ENCODE measurements at regions of chr12 and their contacts with region 1.

Region 1: DNA sequence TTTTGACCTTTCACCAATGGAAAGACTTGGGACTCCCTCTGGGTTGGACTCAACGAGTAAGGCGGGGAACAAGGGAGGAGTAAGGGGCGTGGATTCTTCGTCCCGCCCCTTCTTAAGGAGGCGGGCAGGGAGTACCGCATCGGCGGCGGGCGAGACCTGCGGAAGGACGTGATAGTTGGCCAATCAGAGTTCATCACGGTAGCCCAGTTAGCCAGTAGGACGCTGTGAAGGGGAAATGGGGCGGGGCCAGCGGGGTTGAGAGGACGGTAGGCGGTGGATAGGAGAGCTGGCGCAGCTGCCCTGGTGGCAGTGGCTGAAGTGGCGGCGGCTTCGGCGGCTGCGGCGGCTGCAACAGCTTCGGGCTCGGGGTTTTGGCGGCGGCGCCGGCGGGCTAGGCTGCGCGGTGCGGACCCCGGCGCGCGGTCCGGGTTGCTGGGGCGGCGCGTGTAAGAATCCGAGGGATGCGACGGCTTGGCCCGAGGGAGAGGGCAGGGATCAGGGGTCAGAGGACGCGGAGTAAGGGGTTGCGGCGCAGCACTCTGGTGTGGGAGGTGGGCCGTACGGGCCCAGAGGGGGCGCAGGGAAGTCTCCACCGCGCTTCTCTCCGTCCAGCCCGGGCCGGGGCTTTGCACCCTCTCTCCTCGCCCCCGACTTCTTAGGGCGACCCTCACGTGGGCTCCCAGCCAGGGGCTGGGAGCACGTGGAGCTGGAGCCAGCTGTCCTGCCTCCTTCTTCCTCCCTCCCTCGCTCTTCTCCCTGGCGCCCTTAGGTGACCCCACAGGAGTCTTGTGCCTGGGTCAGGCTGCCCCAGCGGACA is at the start of gene TPCN1:
- DNase-seq: peak; percentile 94 to 99 (median 99)
- ATAC-seq: peak; percentile 97
- H3K4me3 ChIP-seq: peak within 1 kb of the TSS; percentile 70
- H3K4me3 Mint-ChIP-seq: peak within 1 kb of the TSS; percentile 79 to 99 (median 92)
- H3K27ac ChIP-seq: peak within 1 kb of the TSS; percentile 83
- H3K27ac Mint-ChIP-seq: peak within 1 kb of the TSS; percentile 81 to 97 (median 92)
- H3K4me1 ChIP-seq: peaks cover 17 to 32% of the 10 kb centered on the region in 2 donors
- H3K4me1 Mint-ChIP-seq: peaks cover 24 to 49% (median 45%) of the 10 kb centered on the region in 7 donors
- H3K27me3 ChIP-seq: no peaks in the 10 kb centered on the region
- H3K27me3 Mint-ChIP-seq: no peaks in the 10 kb centered on the region
- total RNA-seq, gene TPCN1: 49.5 to 124 (median 107) TPM

Region 2: DNA sequence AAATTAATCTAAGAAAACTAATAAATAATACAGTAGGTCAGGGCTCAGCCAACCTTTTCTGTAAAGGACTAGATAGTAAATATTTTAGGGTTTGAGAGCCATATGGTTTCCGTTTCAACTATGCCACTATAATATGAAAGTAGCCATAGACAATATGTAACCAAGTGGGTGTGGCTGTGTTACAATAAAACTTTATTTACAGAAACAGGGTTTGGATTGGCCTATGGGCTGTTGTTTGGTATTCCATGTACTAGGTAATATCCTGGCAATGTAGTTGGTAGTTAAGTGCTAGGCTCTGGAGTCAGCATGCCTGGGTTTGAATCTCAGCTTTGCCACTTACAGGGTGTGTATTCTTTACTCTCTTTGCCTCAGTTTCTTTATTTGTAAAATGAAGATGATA is 586.4 kb before region 1 on chr12:
- CTCF ChIA-PET with region 1: no interaction called
- POLR2A ChIA-PET with region 1: no interaction called
- intact Hi-C with region 1: no loop called
- DNase-seq: no peak
- ATAC-seq: no peak
- H3K4me3 ChIP-seq: no peak overlapping the region
- H3K4me3 Mint-ChIP-seq: no peak overlapping the region
- H3K27ac ChIP-seq: no peak overlapping the region
- H3K27ac Mint-ChIP-seq: no peak overlapping the region
- H3K4me1 ChIP-seq: no peaks in the 10 kb centered on the region
- H3K4me1 Mint-ChIP-seq: no peaks in the 10 kb centered on the region
- H3K27me3 ChIP-seq: no peaks in the 10 kb centered on the region
- H3K27me3 Mint-ChIP-seq: peaks cover 2 to 54% (median 43%) of the 10 kb centered on the region in 5 donors

Region 3: DNA sequence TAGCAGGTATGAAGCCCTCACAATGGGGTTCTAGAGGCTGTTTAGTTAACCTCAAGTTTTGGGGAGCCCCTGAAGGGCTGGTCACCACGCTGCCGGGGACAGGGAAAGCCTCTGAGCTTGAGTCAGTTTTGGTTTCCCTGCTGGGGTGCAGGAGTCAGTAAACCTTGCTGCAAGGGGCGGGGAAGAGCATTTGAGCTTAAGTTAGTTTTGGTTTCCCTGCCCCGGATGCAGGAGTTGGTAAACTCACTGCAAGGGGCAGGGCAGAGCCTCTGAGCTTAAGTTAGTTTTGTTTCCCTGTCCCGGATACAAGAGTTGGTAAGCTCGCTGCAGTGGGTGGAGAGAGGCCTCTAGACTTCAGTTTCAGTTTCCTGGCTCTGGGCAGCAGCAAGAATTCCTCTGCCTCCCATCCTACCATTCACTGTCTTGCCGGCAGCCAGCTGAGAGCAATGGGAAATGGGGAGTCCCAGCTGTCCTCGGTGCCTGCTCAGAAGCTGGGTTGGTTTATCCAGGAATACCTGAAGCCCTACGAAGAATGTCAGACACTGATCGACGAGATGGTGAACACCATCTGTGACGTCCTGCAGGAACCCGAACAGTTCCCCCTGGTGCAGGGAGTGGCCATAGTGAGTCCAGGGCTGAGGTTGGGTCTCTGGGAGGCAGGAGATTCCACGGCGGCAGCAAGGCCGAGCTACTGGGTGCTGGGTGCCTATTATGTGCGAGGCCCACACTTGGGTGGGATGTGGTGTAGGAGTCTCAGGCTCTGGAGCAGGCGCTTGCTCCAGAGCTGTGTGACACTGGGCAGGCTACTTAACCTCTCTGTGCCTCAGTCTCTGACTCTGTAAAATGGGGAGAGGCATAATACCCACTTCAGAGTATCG is 243.0 kb before region 1 on chr12 and contains the start of gene OAS2:
- CTCF ChIA-PET with region 1: no interaction called
- POLR2A ChIA-PET with region 1: interaction called, 6 read pairs
- intact Hi-C with region 1: loop called in 1 of 2 experiments (anchors 2 kb)
- DNase-seq: peak; percentile 35 to 89 (median 85)
- ATAC-seq: peak; percentile 97
- H3K4me3 ChIP-seq: peak within 1 kb of the TSS; percentile 99
- H3K4me3 Mint-ChIP-seq: peak within 1 kb of the TSS; percentile 87 to 100 (median 96)
- H3K27ac ChIP-seq: peak within 1 kb of the TSS; percentile 89
- H3K27ac Mint-ChIP-seq: peak within 1 kb of the TSS; percentile 97 to 100 (median 99)
- H3K4me1 ChIP-seq: peaks cover 34 to 37% of the 10 kb centered on the region in 2 donors
- H3K4me1 Mint-ChIP-seq: peaks cover 30 to 59% (median 42%) of the 10 kb centered on the region in 7 donors
- H3K27me3 ChIP-seq: no peaks in the 10 kb centered on the region
- H3K27me3 Mint-ChIP-seq: no peaks in the 10 kb centered on the region
- total RNA-seq, gene OAS2: 29.9 to 238 (median 66.0) TPM

Region 4: GRCh38 chr12:113184900-113185773 is 36.3 kb before region 1 on chr12 and contains the starts of genes DDX54 and RITA1:
- CTCF ChIA-PET with region 1: interaction called, 3 read pairs
- POLR2A ChIA-PET with region 1: interaction called, 30 read pairs
- intact Hi-C with region 1: loop called (anchors 1 kb)
- DNase-seq: peak; percentile 85 to 95 (median 91)
- ATAC-seq: peak; percentile 88
- H3K4me3 ChIP-seq: peak within 1 kb of the TSS; percentile 77
- H3K4me3 Mint-ChIP-seq: peak within 1 kb of the TSS; percentile 92 to 99 (median 96)
- H3K27ac ChIP-seq: peak within 1 kb of the TSS; percentile 96
- H3K27ac Mint-ChIP-seq: peak within 1 kb of the TSS; percentile 91 to 98 (median 97)
- H3K4me1 ChIP-seq: peaks cover 20 to 32% of the 10 kb centered on the region in 2 donors
- H3K4me1 Mint-ChIP-seq: peaks cover 20 to 55% (median 33%) of the 10 kb centered on the region in 7 donors
- H3K27me3 ChIP-seq: no peaks in the 10 kb centered on the region
- H3K27me3 Mint-ChIP-seq: no peaks in the 10 kb centered on the region
- total RNA-seq, gene DDX54: 55.8 to 81.1 (median 76.7) TPM
- total RNA-seq, gene RITA1: 6.4 to 20.2 (median 14.1) TPM

Region 5: GRCh38 chr12:113208041-113208934 is 13.1 kb before region 1 on chr12:
- CTCF ChIA-PET with region 1: interaction called, 4 read pairs
- POLR2A ChIA-PET with region 1: interaction called, 32 read pairs
- intact Hi-C with region 1: loop called (anchors 1 kb)
- DNase-seq: peak; percentile 18 to 72 (median 62)
- ATAC-seq: peak; percentile 89
- H3K4me3 ChIP-seq: no peak overlapping the region
- H3K4me3 Mint-ChIP-seq: peak overlapping the region; percentile 59 to 86 (median 77)
- H3K27ac ChIP-seq: peak overlapping the region; percentile 64
- H3K27ac Mint-ChIP-seq: peak overlapping the region; percentile 82 to 97 (median 90)
- H3K4me1 ChIP-seq: peaks cover 38 to 45% of the 10 kb centered on the region in 2 donors
- H3K4me1 Mint-ChIP-seq: peaks cover 28 to 62% (median 51%) of the 10 kb centered on the region in 7 donors
- H3K27me3 ChIP-seq: no peaks in the 10 kb centered on the region
- H3K27me3 Mint-ChIP-seq: no peaks in the 10 kb centered on the region

Region 6: GRCh38 chr12:113248842-113249425 is 27.5 kb after region 1 on chr12:
- CTCF ChIA-PET with region 1: no interaction called
- POLR2A ChIA-PET with region 1: no interaction called
- intact Hi-C with region 1: no loop called
- DNase-seq: no peak
- ATAC-seq: no peak
- H3K4me3 ChIP-seq: no peak overlapping the region
- H3K4me3 Mint-ChIP-seq: no peak overlapping the region
- H3K27ac ChIP-seq: no peak overlapping the region
- H3K27ac Mint-ChIP-seq: peak overlapping the region in 7 of 9 donors; percentile 7 to 81 (median 59)
- H3K4me1 ChIP-seq: no peaks in the 10 kb centered on the region
- H3K4me1 Mint-ChIP-seq: peaks cover 11 to 25% (median 19%) of the 10 kb centered on the region in 7 donors
- H3K27me3 ChIP-seq: no peaks in the 10 kb centered on the region
- H3K27me3 Mint-ChIP-seq: no peaks in the 10 kb centered on the region

Region 7: DNA sequence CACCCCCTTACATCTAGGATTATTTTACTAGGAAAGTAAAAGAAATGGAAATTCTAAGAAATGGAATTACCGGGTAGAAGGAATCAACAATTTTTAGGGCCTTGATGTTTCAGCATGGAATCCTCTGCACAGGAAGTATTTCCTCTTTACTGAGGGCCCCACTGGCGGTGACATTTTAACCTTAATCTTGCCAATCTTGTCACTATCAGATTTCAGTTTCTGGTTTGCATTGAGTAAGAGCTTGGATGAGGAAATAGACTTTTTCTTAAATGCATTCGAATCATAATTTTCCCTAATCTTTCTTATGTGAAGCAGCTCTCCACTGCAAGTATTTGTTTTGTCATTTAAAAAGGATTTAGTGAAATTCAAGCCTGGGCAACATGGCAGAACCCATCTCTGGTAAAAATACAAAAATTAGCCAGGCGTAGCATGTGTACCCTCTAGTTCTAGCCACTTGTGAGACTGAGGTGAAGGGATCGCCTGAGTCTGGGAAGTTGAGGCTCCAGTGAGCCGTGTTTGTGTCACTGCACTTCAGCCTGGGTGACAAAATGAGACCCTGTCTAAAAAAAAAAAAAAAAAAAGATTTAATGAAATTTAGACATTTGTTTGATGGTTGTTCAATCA is 40.6 kb after region 1 on chr12:
- CTCF ChIA-PET with region 1: interaction called, 4 read pairs
- POLR2A ChIA-PET with region 1: interaction called, 21 read pairs
- intact Hi-C with region 1: loop called (anchors 1 to 5 kb)
- DNase-seq: peak in 8 of 9 donors; percentile 25 to 63 (median 52)
- ATAC-seq: peak; percentile 72
- H3K4me3 ChIP-seq: peak overlapping the region; percentile 37
- H3K4me3 Mint-ChIP-seq: peak overlapping the region; percentile 55 to 88 (median 76)
- H3K27ac ChIP-seq: peak overlapping the region; percentile 58
- H3K27ac Mint-ChIP-seq: peak overlapping the region; percentile 77 to 95 (median 91)
- H3K4me1 ChIP-seq: peaks cover 14 to 53% of the 10 kb centered on the region in 2 donors
- H3K4me1 Mint-ChIP-seq: peaks cover 27 to 76% (median 55%) of the 10 kb centered on the region in 7 donors
- H3K27me3 ChIP-seq: no peaks in the 10 kb centered on the region
- H3K27me3 Mint-ChIP-seq: no peaks in the 10 kb centered on the region

Region 8: GRCh38 chr12:113462117-113462774 is 240.9 kb after region 1 on chr12:
- CTCF ChIA-PET with region 1: no interaction called
- POLR2A ChIA-PET with region 1: no interaction called
- intact Hi-C with region 1: no loop called
- DNase-seq: peak; percentile 22 to 65 (median 55)
- ATAC-seq: peak; percentile 77
- H3K4me3 ChIP-seq: no peak overlapping the region
- H3K4me3 Mint-ChIP-seq: peak overlapping the region; percentile 76 to 93 (median 90)
- H3K27ac ChIP-seq: no peak overlapping the region
- H3K27ac Mint-ChIP-seq: peak overlapping the region in 1 of 9 donors; percentile 82
- H3K4me1 ChIP-seq: peaks cover 6 to 17% of the 10 kb centered on the region in 2 donors
- H3K4me1 Mint-ChIP-seq: peaks cover 14 to 40% (median 29%) of the 10 kb centered on the region in 7 donors
- H3K27me3 ChIP-seq: peaks cover 0 to 5% of the 10 kb centered on the region in 2 donors
- H3K27me3 Mint-ChIP-seq: peaks cover 54 to 81% (median 75%) of the 10 kb centered on the region in 5 donors

Region 9: GRCh38 chr12:113965951-113966797 is 744.8 kb after region 1 on chr12 and contains the start of gene RBM19:
- CTCF ChIA-PET with region 1: no interaction called
- POLR2A ChIA-PET with region 1: no interaction called
- intact Hi-C with region 1: loop called in 1 of 2 experiments (anchors 10 kb)
- DNase-seq: peak; percentile 94 to 98 (median 96)
- ATAC-seq: peak; percentile 99
- H3K4me3 ChIP-seq: peak within 1 kb of the TSS; percentile 88
- H3K4me3 Mint-ChIP-seq: peak within 1 kb of the TSS; percentile 94 to 100 (median 98)
- H3K27ac ChIP-seq: peak within 1 kb of the TSS; percentile 54
- H3K27ac Mint-ChIP-seq: peak within 1 kb of the TSS; percentile 92 to 98 (median 95)
- H3K4me1 ChIP-seq: peaks cover 5% of the 10 kb centered on the region in 2 donors
- H3K4me1 Mint-ChIP-seq: peaks cover 38 to 72% (median 53%) of the 10 kb centered on the region in 7 donors
- H3K27me3 ChIP-seq: no peaks in the 10 kb centered on the region
- H3K27me3 Mint-ChIP-seq: peaks cover 0 to 9% (median 0%) of the 10 kb centered on the region in 5 donors
- total RNA-seq, gene RBM19: 45.8 to 108 (median 67.3) TPM

Measured in naive thymus-derived CD4-positive, alpha-beta T cell (primary cell).